Caco-2 (cell line): ENCODE measurements at regions of chr4 and their contacts with region 1.

Region 1: DNA sequence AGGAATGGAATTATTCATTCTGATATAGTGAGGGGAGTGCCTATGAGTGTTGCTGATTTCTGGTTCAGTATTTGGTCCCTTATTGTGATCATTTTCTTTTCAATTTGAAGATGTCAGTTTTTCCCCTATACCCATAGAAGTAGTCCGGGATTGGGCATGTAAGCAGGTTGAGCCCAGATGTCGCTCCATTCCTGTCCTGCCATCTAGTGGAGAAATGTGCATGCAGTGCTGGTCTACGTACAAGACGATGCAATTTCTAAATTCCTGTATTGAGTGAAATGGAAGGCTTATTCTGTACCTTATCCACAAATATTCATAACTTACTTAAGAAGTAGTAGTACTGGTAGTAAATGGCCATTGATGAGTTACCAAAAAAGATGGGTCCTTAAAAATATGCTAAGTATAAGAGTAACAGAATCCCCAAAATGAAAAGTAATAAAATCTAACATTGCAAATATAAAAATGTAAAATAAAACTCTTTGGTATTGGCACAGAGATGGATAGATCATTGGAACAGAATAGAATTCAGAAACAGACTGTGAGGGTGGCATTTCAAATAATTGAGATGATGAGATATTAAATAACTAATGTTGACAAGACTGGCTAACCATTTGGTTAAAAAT is 60.9 kb downstream of the UGT8 start:
- DNase-seq: peak; percentile 71 to 75
- H3K4me3 ChIP-seq: no peak overlapping the region
- H3K4me3 Mint-ChIP-seq: no peak overlapping the region
- H3K27ac Mint-ChIP-seq: no peak overlapping the region
- H3K4me1 ChIP-seq: peaks cover 7% of the 10 kb centered on the region; the same call in 1 of the 2 replicates
- H3K4me1 Mint-ChIP-seq: no peaks in the 10 kb centered on the region
- H3K27me3 ChIP-seq: no peaks in the 10 kb centered on the region
- H3K27me3 Mint-ChIP-seq: no peaks in the 10 kb centered on the region
- CTCF ChIP-seq: peak; percentile 70 to 84

Region 2: GRCh38 chr4:114442856-114443255 is 216.6 kb before region 1 on chr4:
- CTCF ChIA-PET with region 1: no interaction called
- POLR2A ChIA-PET with region 1: no interaction called
- intact Hi-C with region 1: loop called (anchors 1 kb)
- DNase-seq: no peak
- H3K4me3 ChIP-seq: no peak overlapping the region
- H3K4me3 Mint-ChIP-seq: no peak overlapping the region
- H3K27ac Mint-ChIP-seq: no peak overlapping the region
- H3K4me1 ChIP-seq: no peaks in the 10 kb centered on the region
- H3K4me1 Mint-ChIP-seq: no peaks in the 10 kb centered on the region
- H3K27me3 ChIP-seq: no peaks in the 10 kb centered on the region
- H3K27me3 Mint-ChIP-seq: peaks cover 2% of the 10 kb centered on the region
- CTCF ChIP-seq: no peak

Region 3: DNA sequence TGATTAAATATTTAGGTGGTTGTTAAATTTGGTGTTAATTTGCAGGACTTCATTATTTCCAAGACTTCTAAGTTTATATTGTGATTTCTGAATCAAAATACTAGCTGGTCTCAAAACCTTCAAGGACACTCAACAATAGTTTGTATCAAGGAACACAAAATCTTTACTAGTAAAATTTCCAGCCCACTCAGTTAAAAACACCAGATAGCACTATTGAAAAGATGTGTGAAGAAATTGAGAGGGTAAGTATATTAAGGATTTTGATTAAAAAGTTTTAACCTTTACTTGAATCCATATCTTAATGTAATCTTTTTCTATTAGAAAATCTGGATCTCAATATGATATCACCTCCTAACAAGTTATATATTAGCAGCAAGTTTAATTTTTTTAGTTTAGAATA is 150.2 kb before region 1 on chr4:
- CTCF ChIA-PET with region 1: interaction called, 3 read pairs
- POLR2A ChIA-PET with region 1: no interaction called
- intact Hi-C with region 1: loop called (anchors 2 kb)
- DNase-seq: no peak
- H3K4me3 ChIP-seq: no peak overlapping the region
- H3K4me3 Mint-ChIP-seq: no peak overlapping the region
- H3K27ac Mint-ChIP-seq: no peak overlapping the region
- H3K4me1 ChIP-seq: peaks cover 14% of the 10 kb centered on the region
- H3K4me1 Mint-ChIP-seq: peaks cover 8% of the 10 kb centered on the region
- H3K27me3 ChIP-seq: no peaks in the 10 kb centered on the region
- H3K27me3 Mint-ChIP-seq: no peaks in the 10 kb centered on the region
- CTCF ChIP-seq: no peak

Region 4: DNA sequence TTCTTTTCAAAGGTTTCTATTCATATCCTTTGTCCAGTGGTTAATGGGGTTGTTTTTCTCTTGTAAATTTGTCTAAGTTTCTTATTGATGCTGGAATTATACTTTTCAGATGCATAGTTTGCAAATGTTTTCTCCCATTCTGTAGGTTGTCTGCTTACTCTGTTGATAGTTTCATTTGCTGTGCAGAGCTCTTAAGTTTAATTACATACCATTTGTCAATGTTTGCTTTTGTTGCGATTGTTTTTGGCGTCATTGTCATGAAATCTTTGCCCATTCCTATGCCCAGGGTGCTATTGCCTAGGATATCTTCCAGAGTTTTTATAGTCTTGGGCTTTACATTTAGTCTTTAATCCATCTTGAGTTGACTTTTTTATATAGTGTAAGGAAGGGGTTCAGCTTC is 82.1 kb before region 1 on chr4:
- CTCF ChIA-PET with region 1: no interaction called
- POLR2A ChIA-PET with region 1: no interaction called
- intact Hi-C with region 1: no loop called
- DNase-seq: no peak
- H3K4me3 ChIP-seq: no peak overlapping the region
- H3K4me3 Mint-ChIP-seq: no peak overlapping the region
- H3K27ac Mint-ChIP-seq: no peak overlapping the region
- H3K4me1 ChIP-seq: peaks cover 5% of the 10 kb centered on the region
- H3K4me1 Mint-ChIP-seq: no peaks in the 10 kb centered on the region
- H3K27me3 ChIP-seq: no peaks in the 10 kb centered on the region
- H3K27me3 Mint-ChIP-seq: no peaks in the 10 kb centered on the region
- CTCF ChIP-seq: no peak

Region 5: DNA sequence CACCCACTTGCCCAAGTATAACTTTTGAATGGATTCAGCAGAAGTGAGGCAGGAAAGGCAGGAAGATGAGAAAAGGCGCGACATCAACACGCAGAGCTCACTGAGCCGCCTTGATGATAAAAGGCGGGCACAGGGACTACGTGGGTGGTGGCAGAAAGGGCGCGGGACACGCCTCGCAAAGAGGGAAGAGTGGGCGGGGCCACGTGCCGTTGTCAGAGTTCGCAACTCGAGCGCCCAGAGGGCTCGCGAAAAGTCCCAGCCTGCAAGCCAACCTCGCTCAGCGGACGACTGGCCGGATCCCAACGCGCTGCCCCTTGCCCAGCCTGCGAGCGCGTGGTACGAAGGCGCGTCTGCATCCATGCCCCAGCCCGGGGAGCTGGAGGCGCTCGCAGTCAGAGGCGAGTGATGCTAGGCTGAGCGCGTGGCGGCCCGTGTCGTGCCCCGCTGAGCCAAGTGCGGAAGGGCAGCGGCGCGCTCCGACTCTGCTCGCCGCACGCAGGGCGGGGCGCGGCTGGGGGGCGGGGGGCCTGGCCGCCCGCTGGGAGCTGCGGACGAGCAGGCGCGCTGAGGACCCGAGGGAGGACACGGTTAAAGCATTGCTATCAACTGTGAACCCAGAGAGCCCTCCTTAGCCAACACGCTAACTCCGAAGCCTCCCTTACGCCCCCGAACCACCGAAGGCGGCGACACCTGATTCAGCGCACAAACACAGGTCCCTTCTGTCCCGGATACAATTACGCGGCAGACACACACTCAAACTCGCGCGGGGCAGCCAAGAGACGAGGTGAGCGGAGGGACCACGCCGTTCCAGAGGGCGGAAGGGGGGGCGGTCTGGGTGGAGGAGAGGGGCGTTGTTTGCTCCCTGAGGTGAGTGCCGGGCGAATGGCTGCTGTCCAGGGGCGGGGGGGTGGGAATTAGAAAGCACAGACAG is 61.0 kb before region 1 on chr4 and contains the start of gene UGT8:
- CTCF ChIA-PET with region 1: no interaction called
- POLR2A ChIA-PET with region 1: no interaction called
- intact Hi-C with region 1: loop called (anchors 2 kb)
- DNase-seq: peak; percentile 70 to 75
- H3K4me3 ChIP-seq: peak within 1 kb of the TSS; percentile 77
- H3K4me3 Mint-ChIP-seq: peak within 1 kb of the TSS; percentile 96
- H3K27ac Mint-ChIP-seq: peak within 1 kb of the TSS; percentile 52
- H3K4me1 ChIP-seq: 0 out of 2 replicates have a peak, but pooled peaks cover 3% of the 10 kb centered on the region
- H3K4me1 Mint-ChIP-seq: peaks cover 8% of the 10 kb centered on the region
- H3K27me3 ChIP-seq: no peaks in the 10 kb centered on the region
- H3K27me3 Mint-ChIP-seq: peaks cover 4% of the 10 kb centered on the region
- CTCF ChIP-seq: no peak
- total RNA-seq, gene UGT8: 11.9 and 14.8 TPM in 2 replicates

Region 6: GRCh38 chr4:115145393-115146160 is 486.1 kb after region 1 on chr4:
- CTCF ChIA-PET with region 1: no interaction called
- POLR2A ChIA-PET with region 1: no interaction called
- intact Hi-C with region 1: no loop called
- DNase-seq: no peak
- H3K4me3 ChIP-seq: no peak overlapping the region
- H3K4me3 Mint-ChIP-seq: no peak overlapping the region
- H3K27ac Mint-ChIP-seq: no peak overlapping the region
- H3K4me1 ChIP-seq: no peaks in the 10 kb centered on the region
- H3K4me1 Mint-ChIP-seq: no peaks in the 10 kb centered on the region
- H3K27me3 ChIP-seq: no peaks in the 10 kb centered on the region
- H3K27me3 Mint-ChIP-seq: peaks cover 3% of the 10 kb centered on the region
- CTCF ChIP-seq: no peak